Posterior vena cava (tissue), 2 donors: ENCODE measurements at regions of chr12 and their contacts with region 1.

Region 1: DNA sequence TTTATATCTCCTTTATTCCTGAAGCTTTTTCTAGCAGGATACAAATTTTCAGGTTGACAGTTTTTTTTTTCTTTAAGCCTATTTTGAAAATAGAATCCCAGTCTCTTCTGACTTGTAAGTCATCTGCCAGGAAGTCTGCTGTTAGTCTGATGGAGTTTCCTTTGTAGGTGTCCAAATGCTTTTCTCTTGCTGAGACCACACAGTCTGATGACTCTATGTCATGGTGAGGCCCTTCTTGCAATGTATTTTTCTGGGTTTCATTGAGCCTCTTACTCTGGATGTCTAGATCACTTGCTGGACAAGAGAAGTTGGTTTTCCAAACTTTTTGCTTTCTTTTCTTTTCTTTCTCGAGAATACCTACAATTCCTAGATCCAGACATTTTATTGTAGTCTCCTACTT is 30.6 kb downstream of the USP15 start:
- DNase-seq: no peak

Region 2: GRCh38 chr12:62146318-62146717 is 144.5 kb before region 1 on chr12:
- intact Hi-C with region 1: no loop called
- DNase-seq: no peak

Region 3: DNA sequence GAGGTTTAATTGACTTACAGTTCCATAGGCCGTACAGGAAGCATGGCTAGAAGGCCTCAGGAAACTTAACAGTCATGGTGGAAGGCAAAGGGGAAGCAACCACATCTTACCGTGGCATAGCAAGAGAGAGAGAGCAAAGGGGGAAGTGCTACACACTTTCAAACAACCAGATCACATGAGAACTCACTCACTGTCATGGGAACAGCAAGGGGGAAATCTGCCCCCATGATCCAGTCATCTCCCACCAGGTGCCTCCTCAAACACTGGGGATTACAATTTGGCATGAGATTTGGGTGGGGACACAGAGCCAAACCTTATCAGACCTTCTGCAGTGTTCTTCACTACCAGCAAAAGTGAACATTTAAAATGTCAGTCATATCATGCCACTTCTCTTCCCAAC is 28.2 kb after region 1 on chr12:
- intact Hi-C with region 1: loop called in 1 of 2 experiments (anchors 1 kb)
- DNase-seq: no peak

Region 4: GRCh38 chr12:62332598-62332997 is 41.8 kb after region 1 on chr12:
- intact Hi-C with region 1: no loop called
- DNase-seq: no peak